HCT116 (cell line): ENCODE measurements at regions of chr1 and their contacts with region 1.

Region 1: DNA sequence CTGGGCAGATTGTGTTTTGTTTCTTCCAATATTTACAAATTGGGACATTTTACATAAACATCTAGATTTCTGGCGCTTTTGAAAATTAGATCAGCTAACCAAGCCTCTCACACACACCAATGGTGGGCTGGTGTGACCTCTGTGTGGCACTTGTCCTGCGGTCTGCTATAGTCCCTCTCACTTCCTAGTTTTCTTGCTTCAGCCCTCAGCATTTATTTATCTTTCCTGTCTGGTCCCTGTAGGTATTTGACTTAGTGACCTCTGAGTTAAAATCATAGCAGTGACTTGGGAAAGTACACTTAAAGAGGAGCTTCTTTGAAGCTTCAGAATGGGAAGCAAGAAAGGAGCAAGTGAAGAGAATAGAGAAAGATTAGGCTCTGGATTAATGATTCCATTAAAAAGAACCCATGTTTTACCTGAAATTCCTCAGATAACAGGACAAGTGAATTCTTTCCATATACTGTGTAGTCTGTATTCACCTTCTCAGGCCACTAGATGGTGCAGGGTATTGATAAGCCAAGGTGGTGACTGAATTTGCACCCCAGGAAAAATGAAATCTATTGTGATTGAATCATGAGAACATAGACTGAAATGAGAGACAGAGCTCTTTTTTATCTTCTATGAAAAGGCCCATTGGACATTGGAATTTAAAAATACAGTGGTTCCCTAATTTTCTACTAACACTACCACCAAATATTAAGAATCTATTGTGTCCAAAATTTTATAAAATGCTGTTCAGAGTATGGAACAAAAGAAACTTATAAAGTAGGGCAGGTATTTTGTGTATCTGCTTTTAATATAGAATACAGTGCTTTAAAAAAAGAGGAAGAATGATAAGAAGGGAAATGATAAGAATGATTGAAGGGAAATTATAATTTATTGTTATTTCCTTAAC is 7.1 kb upstream of the DIPK1A start:
- DNase-seq: peak; percentile 42
- ATAC-seq: peak; percentile 95
- H3K4me3 ChIP-seq: no peak overlapping the region
- H3K27ac ChIP-seq: no peak overlapping the region
- H3K4me1 ChIP-seq: peaks cover 0 to 4% of the 10 kb centered on the region in 2 experiments; a peak in 1 of 4 replicates
- H3K27me3 ChIP-seq: no peaks in the 10 kb centered on the region
- CTCF ChIP-seq: peak; percentile 72 to 83 (median 75); a peak in 5 of 6 replicates
- POLR2A ChIP-seq: no peak
- RAD21 ChIP-seq: peak; percentile 71

Region 2: GRCh38 chr1:92994105-92994712 is 25.8 kb after region 1 on chr1:
- CTCF ChIA-PET with region 1: interaction called, 12 read pairs
- POLR2A ChIA-PET with region 1: no interaction called
- RAD21 ChIA-PET with region 1: interaction called in 1 of 2 experiments, 5 read pairs
- intact Hi-C with region 1: loop called (anchors 1 kb)
- DNase-seq: peak; percentile 75
- ATAC-seq: peak; percentile 92
- H3K4me3 ChIP-seq: no peak overlapping the region
- H3K27ac ChIP-seq: no peak overlapping the region
- H3K4me1 ChIP-seq: 0 out of 4 replicates have a peak, but pooled peaks cover 0 to 4% of the 10 kb centered on the region in 2 experiments
- H3K27me3 ChIP-seq: no peaks in the 10 kb centered on the region
- CTCF ChIP-seq: peak; percentile 66 to 97 (median 91)
- POLR2A ChIP-seq: no peak
- RAD21 ChIP-seq: peak; percentile 92